CD14-positive monocyte (primary cell): ENCODE measurements at regions of chr15 and their contacts with region 1.

Region 1: GRCh38 chr15:90539789-90540188 is 10.1 kb downstream of the CRTC3 start:
- DNase-seq: no peak
- H3K4me3 ChIP-seq: no peak overlapping the region
- H3K4me3 Mint-ChIP-seq: no peak overlapping the region
- H3K27ac ChIP-seq: no peak overlapping the region
- H3K27ac Mint-ChIP-seq: peak overlapping the region in 1 of 7 donors; percentile 55
- H3K4me1 ChIP-seq: no peaks in the 10 kb centered on the region
- H3K4me1 Mint-ChIP-seq: peaks cover 14% of the 10 kb centered on the region
- H3K27me3 ChIP-seq: no peaks in the 10 kb centered on the region
- H3K27me3 Mint-ChIP-seq: peaks cover 0 to 2% (median 0%) of the 10 kb centered on the region in 3 donors
- CTCF ChIP-seq: no peak

Region 2: DNA sequence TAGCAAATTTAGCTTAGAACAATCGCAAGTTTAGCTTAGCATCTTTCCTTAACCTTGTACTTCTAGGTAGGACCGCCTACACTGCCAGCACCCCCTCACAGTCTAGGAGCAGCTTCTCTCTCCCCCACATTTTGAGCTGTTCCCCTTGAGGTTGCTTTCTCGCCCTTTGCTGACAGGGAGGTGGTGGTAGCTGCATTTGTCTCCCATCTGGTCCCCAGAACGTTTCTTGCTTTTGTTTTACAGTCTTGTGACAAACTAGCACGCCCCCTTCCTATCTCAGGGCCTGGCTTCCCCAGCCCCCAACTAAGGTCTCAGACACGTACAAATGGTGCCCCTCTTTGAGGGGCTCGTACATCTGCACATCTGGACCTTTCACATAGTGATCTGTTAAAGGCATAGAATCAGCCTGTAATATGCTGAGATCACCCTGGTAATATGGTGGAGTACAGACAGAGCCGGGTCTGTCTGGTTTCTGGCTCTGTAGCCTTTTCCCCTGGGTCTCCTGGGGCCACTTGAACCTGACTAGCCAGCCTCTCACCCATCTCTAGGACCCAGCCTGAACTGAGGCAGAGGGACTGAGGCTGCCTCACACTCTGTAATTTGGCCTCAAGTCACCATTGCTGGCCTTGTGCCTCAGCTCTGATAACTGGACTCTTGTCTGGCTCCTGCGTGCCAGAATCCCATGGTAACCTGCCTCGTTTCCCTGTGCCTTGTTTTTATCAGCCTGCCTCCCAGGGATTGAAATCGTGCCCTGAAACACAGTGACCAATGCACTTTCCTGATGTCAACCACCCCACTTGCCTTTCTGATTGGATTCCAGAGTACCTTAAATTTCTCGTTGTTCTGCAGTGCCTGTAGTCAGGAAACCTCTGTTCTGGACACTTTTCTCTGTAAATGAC is 17.6 kb after region 1 on chr15:
- intact Hi-C with region 1: no loop called
- DNase-seq: no peak
- H3K4me3 ChIP-seq: no peak overlapping the region
- H3K4me3 Mint-ChIP-seq: no peak overlapping the region
- H3K27ac ChIP-seq: no peak overlapping the region
- H3K27ac Mint-ChIP-seq: peak overlapping the region; percentile 31 to 86 (median 64)
- H3K4me1 ChIP-seq: peaks cover 48 to 55% of the 10 kb centered on the region in 2 donors
- H3K4me1 Mint-ChIP-seq: peaks cover 60% of the 10 kb centered on the region
- H3K27me3 ChIP-seq: no peaks in the 10 kb centered on the region
- H3K27me3 Mint-ChIP-seq: peaks cover 0 to 2% (median 0%) of the 10 kb centered on the region in 3 donors
- CTCF ChIP-seq: no peak

Region 3: DNA sequence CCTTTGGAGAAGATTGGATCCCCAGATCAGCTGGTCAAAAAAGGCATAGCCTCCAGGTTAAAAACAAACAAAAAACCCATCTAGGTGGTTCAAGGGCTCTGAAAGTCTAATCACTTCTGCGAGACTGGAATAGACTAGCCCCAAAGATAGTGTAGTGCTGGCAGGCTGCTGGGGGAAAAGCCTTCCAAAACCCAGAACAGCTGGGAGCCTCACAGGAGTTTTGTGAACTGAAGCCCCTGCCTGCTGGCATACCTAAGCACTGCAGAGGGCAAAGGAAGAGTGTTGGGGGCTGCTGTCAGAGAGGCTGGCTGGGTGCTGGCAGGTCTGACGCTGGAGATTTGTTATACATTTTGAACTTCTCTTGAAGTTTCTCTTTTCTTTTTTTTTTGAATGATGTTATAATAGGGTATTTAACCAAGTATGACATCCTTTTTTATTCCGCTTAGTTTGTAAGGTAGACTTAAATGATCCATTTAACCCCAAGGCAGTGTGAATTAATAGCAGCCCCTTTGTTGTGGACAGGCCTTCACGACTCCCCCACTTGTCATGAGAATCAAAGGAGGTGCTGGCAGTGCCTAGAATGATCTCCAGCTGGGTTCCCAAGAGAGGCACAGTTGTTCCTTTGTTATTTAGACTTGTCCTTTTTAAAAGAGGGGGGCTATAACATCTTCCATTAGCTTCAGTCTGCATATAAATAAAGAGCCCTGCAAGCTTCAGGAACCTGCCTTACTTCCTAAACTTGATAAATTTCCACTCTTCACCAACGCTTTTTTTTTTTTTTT is 43.9 kb after region 1 on chr15:
- intact Hi-C with region 1: loop called in 1 of 2 experiments (anchors 5 kb)
- DNase-seq: no peak
- H3K4me3 ChIP-seq: no peak overlapping the region
- H3K4me3 Mint-ChIP-seq: no peak overlapping the region
- H3K27ac ChIP-seq: no peak overlapping the region
- H3K27ac Mint-ChIP-seq: peak overlapping the region in 1 of 7 donors; percentile 2
- H3K4me1 ChIP-seq: peaks cover 33 to 41% of the 10 kb centered on the region in 2 donors
- H3K4me1 Mint-ChIP-seq: peaks cover 48% of the 10 kb centered on the region
- H3K27me3 ChIP-seq: no peaks in the 10 kb centered on the region
- H3K27me3 Mint-ChIP-seq: peaks cover 0 to 8% (median 2%) of the 10 kb centered on the region in 3 donors
- CTCF ChIP-seq: no peak

Region 4: DNA sequence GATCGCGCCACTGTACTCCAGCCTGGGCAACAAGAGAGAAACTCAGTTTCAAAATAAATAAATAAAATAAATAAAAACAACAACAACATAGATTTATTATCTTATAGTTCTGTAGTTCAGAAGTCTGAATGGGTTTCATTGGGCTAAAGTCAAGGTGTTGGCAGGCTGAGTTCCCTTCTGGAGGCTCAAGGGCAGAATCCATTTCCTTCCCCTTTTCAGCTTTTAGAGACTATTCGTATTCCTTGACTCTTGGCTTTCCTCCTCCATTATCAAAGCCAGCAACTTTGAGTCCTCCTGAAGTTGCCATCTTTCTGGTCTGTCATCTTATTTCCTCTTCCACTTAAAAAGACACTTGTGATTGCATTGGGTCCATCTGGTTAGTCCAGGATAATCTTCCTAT is 189.5 kb after region 1 on chr15:
- intact Hi-C with region 1: no loop called
- DNase-seq: peak in 2 of 3 donors; percentile 32 to 56
- H3K4me3 ChIP-seq: no peak overlapping the region
- H3K4me3 Mint-ChIP-seq: no peak overlapping the region
- H3K27ac ChIP-seq: peak overlapping the region in 1 of 2 donors; percentile 60
- H3K27ac Mint-ChIP-seq: peak overlapping the region in 2 of 7 donors; percentile 8 to 72
- H3K4me1 ChIP-seq: peaks cover 17 to 30% of the 10 kb centered on the region in 2 donors
- H3K4me1 Mint-ChIP-seq: peaks cover 33% of the 10 kb centered on the region
- H3K27me3 ChIP-seq: no peaks in the 10 kb centered on the region
- H3K27me3 Mint-ChIP-seq: peaks cover 0 to 3% (median 0%) of the 10 kb centered on the region in 3 donors
- CTCF ChIP-seq: no peak